WTC11 (cell line): ENCODE measurements at regions of chr19 and their contacts with region 1.

Region 1: GRCh38 chr19:49340069-49340864 is 5.1 kb downstream of the CD37 start:
- DNase-seq: peak; percentile 60
- ATAC-seq: no peak
- H3K4me3 Mint-ChIP-seq: peak overlapping the region; percentile 32; the same call in 1 of the 2 replicates
- H3K27ac Mint-ChIP-seq: peak overlapping the region; percentile 67; the same call in 1 of the 2 replicates
- H3K4me1 Mint-ChIP-seq: peaks cover 23% of the 10 kb centered on the region
- H3K27me3 Mint-ChIP-seq: peaks cover 35% of the 10 kb centered on the region
- CTCF ChIP-seq: no peak

Region 2: GRCh38 chr19:49106648-49107135 is 233.6 kb before region 1 on chr19:
- CTCF ChIA-PET with region 1: no interaction called
- POLR2A ChIA-PET with region 1: no interaction called
- DNase-seq: peak; percentile 83
- ATAC-seq: peak; percentile 80
- H3K4me3 Mint-ChIP-seq: peak overlapping the region; percentile 7; the same call in 1 of the 2 replicates
- H3K27ac Mint-ChIP-seq: peak overlapping the region; percentile 95
- H3K4me1 Mint-ChIP-seq: peaks cover 13% of the 10 kb centered on the region
- H3K27me3 Mint-ChIP-seq: no peaks in the 10 kb centered on the region
- CTCF ChIP-seq: peak; percentile 78

Region 3: GRCh38 chr19:49216071-49216470 is 124.2 kb before region 1 on chr19:
- CTCF ChIA-PET with region 1: no interaction called
- POLR2A ChIA-PET with region 1: no interaction called
- DNase-seq: no peak
- ATAC-seq: no peak
- H3K4me3 Mint-ChIP-seq: no peak overlapping the region
- H3K27ac Mint-ChIP-seq: no peak overlapping the region
- H3K4me1 Mint-ChIP-seq: peaks cover 4% of the 10 kb centered on the region
- H3K27me3 Mint-ChIP-seq: peaks cover 6% of the 10 kb centered on the region
- CTCF ChIP-seq: no peak

Region 4: GRCh38 chr19:49233163-49233562 is 107.1 kb before region 1 on chr19:
- CTCF ChIA-PET with region 1: no interaction called
- POLR2A ChIA-PET with region 1: no interaction called
- DNase-seq: no peak
- ATAC-seq: no peak
- H3K4me3 Mint-ChIP-seq: no peak overlapping the region
- H3K27ac Mint-ChIP-seq: no peak overlapping the region
- H3K4me1 Mint-ChIP-seq: no peaks in the 10 kb centered on the region
- H3K27me3 Mint-ChIP-seq: peaks cover 3% of the 10 kb centered on the region; the same call in 1 of the 2 replicates
- CTCF ChIP-seq: no peak

Region 5: GRCh38 chr19:49327878-49328544 is 12.3 kb before region 1 on chr19:
- CTCF ChIA-PET with region 1: interaction called, 20 read pairs
- POLR2A ChIA-PET with region 1: no interaction called
- DNase-seq: peak; percentile 62
- ATAC-seq: peak; percentile 79
- H3K4me3 Mint-ChIP-seq: no peak overlapping the region
- H3K27ac Mint-ChIP-seq: no peak overlapping the region
- H3K4me1 Mint-ChIP-seq: peaks cover 2% of the 10 kb centered on the region; the same call in 1 of the 2 replicates
- H3K27me3 Mint-ChIP-seq: peaks cover 22% of the 10 kb centered on the region
- CTCF ChIP-seq: peak; percentile 67

Region 6: GRCh38 chr19:49363268-49364082 is 23.2 kb after region 1 on chr19 and contains the start of gene DKKL1:
- CTCF ChIA-PET with region 1: interaction called, 5 read pairs
- POLR2A ChIA-PET with region 1: interaction called, 12 read pairs
- DNase-seq: peak; percentile 100
- ATAC-seq: peak; percentile 88
- H3K4me3 Mint-ChIP-seq: no peak within 1 kb of the TSS
- H3K27ac Mint-ChIP-seq: no peak within 1 kb of the TSS
- H3K4me1 Mint-ChIP-seq: peaks cover 8% of the 10 kb centered on the region
- H3K27me3 Mint-ChIP-seq: peaks cover 5% of the 10 kb centered on the region
- CTCF ChIP-seq: no peak
- total RNA-seq, gene DKKL1: 2.4 to 3.0 TPM (median 2.9 TPM) in 3 replicates

Region 7: DNA sequence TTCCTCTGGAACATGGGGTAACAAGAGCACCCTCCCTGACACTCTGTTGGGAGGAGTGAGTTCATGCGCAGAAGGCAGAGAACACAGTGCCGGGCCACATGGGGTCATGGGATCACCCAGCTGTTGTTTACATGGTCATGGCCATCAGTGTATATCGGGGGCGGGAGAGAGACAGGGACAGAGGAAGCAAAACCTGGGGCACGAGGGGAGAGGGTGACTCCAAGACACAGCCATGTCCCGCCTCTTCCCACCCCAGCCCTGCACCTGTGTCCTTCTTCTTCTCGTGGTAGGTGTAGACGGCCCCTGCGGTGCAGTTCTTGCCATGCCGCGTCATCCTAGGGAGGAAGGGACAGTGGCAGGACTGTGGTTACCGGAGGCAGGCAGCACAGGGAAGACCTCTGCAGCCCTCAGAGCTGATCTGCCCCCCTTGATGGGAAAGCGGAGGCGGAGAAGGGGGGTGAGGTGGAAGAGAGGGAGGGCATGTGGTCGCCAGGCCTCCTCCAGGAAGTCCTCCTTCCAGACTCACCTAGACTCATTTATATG is 220.2 kb after region 1 on chr19:
- CTCF ChIA-PET with region 1: no interaction called
- POLR2A ChIA-PET with region 1: no interaction called
- DNase-seq: no peak
- ATAC-seq: no peak
- H3K4me3 Mint-ChIP-seq: no peak overlapping the region
- H3K27ac Mint-ChIP-seq: peak overlapping the region; percentile 91
- H3K4me1 Mint-ChIP-seq: peaks cover 24% of the 10 kb centered on the region
- H3K27me3 Mint-ChIP-seq: no peaks in the 10 kb centered on the region
- CTCF ChIP-seq: no peak